ENCODE measurements at regions of chr1 and their contacts with region 1.

Region 1: DNA sequence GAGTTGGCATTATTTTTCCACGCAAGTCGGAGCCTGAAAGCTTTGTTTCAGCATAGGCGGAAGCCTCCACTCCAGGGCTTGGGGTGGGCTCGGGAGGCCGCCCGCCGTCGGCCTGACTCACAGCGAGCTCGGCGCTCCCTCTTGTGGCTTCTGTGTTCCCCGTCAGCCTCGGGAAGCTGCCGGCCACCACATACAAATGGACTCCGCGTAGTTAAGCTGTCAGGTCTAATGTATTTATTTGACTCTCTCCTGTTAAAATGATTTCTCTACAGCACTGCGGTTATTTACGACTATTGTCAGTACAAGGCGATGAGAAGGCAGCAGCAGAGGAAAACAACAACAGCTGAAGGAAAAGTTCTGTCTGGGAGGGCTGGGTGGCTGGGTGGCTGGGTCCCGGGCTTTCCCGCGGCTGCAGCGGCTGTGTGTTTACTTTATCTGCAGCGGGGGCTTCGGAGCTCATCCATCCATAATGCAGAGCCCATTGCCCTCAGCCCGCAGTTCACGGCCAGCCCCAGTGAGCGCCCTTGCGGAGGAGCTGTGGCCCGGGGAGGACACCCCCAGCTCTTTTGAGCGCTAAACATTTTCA is 375.7 kb upstream of the CAMK1G start:
- DNase-seq: peak; percentile 74
- ATAC-seq: peak; percentile 95 to 96

Region 2: DNA sequence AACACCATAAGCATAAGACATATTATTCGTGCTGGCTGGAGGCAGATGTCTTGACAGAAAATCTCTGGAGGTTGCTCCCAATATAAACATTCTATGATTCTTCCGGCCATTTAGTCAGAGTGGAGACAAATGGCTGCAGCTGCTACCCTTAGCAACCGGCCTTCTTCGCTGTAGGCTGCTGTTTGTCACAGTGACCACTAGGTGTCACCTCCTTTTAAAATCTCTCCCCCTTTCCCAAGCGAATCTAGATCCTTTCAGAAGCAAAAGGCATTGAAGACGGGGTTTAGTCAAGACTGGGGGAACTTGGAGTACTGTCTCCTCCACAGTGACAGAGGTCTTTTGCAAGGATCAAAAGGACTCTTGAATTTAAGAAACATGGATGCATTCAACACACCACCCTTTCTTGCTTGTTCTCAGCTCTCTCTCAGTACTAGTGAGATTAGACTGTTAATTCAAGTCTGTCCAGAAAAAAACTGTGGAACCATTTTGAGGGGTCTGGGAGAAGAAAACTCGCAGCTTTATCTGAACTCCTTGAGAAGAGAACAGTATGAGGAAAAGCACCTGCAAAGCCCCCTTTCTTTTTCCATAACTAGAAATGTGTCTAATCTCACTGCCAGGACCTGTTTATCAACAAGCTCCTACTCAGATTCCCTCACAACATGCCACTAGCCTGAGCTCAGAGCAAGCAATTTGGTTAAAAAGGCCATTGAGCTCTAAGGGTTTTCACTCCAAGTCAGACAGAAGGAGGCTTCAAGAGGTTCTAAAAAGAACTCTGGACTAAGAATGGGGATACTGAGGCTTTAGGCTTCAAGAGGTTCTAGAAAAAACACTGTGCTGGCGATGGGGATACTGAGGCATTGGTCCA is 555.3 kb before region 1 on chr1:
- intact Hi-C with region 1: loop called (anchors 5 to 10 kb)
- DNase-seq: peak; percentile 40
- ATAC-seq: peak; percentile 78 to 85

Region 3: DNA sequence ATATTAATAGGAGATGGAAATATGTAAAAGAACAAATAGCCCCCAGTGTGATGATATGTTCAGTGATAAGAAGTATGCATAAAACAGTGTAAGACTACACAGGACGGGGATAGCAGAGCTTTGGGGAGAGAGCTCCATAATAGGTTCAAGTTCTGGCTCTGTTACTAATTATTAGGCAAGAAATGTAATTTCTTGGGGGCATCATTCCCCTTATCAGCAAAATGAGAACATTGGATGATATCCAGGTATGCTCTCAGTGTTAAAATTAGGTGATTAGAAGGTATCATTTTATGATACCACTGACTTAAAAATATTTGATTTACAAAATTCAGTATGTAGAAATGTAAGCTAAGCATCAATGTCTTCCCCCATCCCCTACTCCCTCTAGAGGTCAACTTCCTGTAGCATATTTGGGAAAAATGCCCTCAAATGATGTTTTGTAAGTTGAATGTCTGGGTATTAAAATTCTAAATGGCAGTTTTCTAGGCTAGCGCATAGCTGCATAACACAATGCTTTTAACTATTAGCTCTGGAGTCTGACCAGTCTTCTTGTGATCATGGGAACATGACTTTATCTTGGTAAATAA is 210.0 kb before region 1 on chr1:
- intact Hi-C with region 1: no loop called
- DNase-seq: no peak
- ATAC-seq: no peak

Region 4: GRCh38 chr1:209172286-209172685 is 35.5 kb before region 1 on chr1:
- intact Hi-C with region 1: no loop called
- DNase-seq: no peak
- ATAC-seq: no peak

Region 5: DNA sequence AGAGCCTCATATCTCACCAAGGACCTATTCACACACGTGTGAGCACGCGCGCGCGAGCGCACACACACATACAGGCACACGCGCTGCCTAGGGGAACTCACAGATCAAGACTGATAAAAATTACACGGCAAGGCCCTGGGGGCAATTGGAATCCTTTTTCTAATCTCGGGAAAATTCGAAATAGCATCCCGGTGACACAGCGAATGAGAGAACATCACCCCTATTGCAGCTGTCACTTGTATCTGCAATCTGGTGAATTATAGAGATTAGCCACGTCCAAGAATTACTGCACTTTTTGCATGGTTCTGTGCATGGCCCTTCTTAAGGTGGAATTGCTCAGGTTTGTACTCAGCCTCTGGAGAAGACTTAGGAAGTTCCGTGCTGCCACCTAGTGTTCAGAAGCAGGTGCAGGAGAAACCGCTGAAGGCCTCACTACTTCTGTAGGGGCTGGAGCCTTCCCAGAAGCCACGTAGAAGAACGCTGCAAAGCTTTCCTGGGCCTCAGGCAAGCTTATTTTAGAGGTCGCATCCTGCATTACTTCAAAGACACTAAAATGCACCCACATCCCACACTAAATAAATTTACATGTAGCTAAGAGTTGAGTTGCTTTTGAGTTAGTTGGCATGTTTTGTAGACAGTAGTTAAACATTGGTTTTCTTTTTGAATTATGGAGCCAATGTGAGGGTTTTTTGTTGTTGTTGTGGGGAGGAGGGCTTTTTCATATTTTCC is 146.5 kb after region 1 on chr1:
- intact Hi-C with region 1: loop called in 1 of 2 experiments (anchors 10 kb)
- DNase-seq: peak; percentile 78
- ATAC-seq: peak; percentile 84 to 97

Region 6: DNA sequence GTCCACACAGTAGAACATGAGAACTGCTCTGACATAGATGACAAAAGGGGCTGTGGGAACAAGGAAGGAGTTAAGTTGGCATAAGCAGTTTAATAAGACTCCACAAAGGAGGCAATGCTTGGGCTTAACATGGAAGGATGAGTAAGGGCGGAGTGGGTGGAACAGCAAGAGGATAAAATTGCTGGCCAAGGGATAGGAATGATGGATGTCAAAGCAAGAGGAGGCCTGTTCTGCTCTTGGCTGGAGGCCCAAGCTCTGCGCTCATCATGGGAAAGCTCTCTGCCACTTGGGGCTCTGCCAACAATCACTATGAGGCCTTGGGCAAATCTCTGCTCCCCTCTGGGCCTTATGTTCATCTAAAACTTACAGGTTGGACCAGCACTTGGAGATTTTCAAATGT is 277.4 kb after region 1 on chr1:
- intact Hi-C with region 1: no loop called
- DNase-seq: peak; percentile 37
- ATAC-seq: peak; percentile 59 to 94

Region 7: GRCh38 chr1:209565759-209566678 is 358.2 kb after region 1 on chr1:
- intact Hi-C with region 1: loop called in 1 of 2 experiments (anchors 5 kb)
- DNase-seq: peak; percentile 80
- ATAC-seq: peak; percentile 87 to 88

Measured in left cardiac atrium (tissue), 4 donors.